Naive thymus-derived CD4-positive, alpha-beta T cell (primary cell): ENCODE measurements at regions of chr14 and their contacts with region 1.

Region 1: GRCh38 chr14:59189786-59190771 is 1.6 kb downstream of the DAAM1 start:
- DNase-seq: peak; percentile 34 to 76 (median 49)
- ATAC-seq: peak; percentile 4
- H3K4me3 ChIP-seq: peak overlapping the region; percentile 93
- H3K4me3 Mint-ChIP-seq: peak overlapping the region; percentile 92 to 100 (median 96)
- H3K27ac ChIP-seq: peak overlapping the region; percentile 91
- H3K27ac Mint-ChIP-seq: peak overlapping the region; percentile 85 to 98 (median 93)
- H3K4me1 ChIP-seq: peaks cover 0 to 10% of the 10 kb centered on the region in 2 donors
- H3K4me1 Mint-ChIP-seq: peaks cover 15 to 30% (median 21%) of the 10 kb centered on the region in 7 donors
- H3K27me3 ChIP-seq: no peaks in the 10 kb centered on the region
- H3K27me3 Mint-ChIP-seq: peaks cover 0 to 22% (median 4%) of the 10 kb centered on the region in 5 donors

Region 2: DNA sequence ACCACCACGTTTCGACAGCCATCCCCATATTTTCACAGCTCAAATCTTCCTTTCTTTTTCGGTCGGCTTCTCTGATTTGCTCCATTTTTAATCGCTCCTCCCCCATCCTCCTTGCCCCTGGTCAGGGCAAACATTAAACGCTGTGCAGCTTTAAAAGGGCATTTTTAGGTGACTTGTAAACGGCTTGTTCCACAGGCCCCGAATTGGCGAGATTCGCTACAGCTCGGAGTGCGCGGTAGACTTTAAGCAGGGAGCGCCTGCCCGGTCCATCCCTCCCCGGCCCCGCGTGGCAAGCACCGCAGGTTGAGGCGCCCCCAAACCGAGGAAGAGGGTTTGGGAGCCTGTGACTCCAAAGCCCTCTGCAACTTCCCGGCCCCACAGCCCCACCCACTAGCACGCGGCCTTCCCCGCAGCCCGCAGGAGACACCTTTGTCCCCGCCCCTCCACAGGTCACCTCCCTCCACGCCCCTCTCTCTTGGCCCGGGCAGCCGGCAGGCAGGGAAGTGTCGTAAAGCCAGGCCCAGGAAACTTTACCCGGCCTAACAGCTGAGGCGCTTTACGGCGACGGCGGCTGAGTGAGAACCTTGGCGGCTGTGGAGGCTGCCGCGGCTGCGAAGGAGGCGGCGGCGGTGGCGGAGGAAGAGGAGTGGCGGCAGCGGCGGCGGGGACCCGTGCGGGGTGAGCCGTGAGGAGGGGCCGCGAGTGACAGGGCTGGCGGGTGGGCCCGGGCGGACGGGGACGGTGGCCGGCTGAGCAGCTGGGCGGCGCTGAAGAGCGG is 1799.9 kb before region 1 on chr14 and contains the start of gene NAA30:
- CTCF ChIA-PET with region 1: no interaction called
- POLR2A ChIA-PET with region 1: no interaction called
- intact Hi-C with region 1: loop called in 1 of 2 experiments (anchors 5 kb)
- DNase-seq: peak; percentile 80 to 97 (median 92)
- ATAC-seq: peak; percentile 98
- H3K4me3 ChIP-seq: peak within 1 kb of the TSS; percentile 68
- H3K4me3 Mint-ChIP-seq: peak within 1 kb of the TSS; percentile 86 to 98 (median 94)
- H3K27ac ChIP-seq: peak within 1 kb of the TSS; percentile 72
- H3K27ac Mint-ChIP-seq: peak within 1 kb of the TSS; percentile 88 to 99 (median 95)
- H3K4me1 ChIP-seq: peaks cover 11 to 13% of the 10 kb centered on the region in 2 donors
- H3K4me1 Mint-ChIP-seq: peaks cover 31 to 58% (median 40%) of the 10 kb centered on the region in 7 donors
- H3K27me3 ChIP-seq: no peaks in the 10 kb centered on the region
- H3K27me3 Mint-ChIP-seq: peaks cover 0 to under 1% (median 0%) of the 10 kb centered on the region in 5 donors
- total RNA-seq, gene NAA30: 14.6 to 19.6 (median 16.2) TPM

Region 3: DNA sequence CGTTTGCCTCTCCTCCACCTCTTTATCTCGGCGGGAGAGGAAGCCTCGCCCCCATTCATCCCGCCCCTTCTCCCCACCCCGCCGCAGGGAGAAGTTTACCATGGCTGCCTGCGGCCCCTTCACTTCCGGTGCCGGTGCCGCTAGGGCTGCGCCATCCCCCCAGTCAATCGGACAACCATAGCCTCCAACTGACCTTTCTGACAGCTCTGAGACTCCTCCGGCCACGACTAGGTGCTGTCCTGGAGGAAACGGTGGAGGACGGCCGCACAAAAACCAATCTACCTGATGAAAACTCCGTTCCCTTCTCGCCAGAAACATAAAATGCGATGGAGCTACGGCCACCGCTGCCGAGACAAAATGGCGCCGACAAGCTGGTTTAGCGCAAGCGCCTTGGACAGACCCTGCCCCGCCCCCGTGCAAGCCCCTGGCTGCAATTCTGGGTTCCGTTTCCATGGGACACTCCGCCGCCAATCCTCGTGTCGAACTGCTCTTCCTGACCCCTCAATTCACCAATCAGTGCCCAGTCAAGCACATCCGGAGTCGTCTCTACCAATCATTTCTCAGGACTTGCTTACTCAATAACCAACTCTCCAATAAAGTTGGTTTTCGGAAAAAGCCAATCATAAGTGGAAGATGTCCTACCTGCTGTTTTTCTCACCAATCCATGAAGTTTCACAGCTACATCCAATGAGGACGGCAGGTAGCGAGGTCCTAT is 892.2 kb before region 1 on chr14:
- CTCF ChIA-PET with region 1: no interaction called
- POLR2A ChIA-PET with region 1: interaction called, 4 read pairs
- intact Hi-C with region 1: loop called (anchors 1 kb)
- DNase-seq: peak; percentile 90 to 100 (median 99)
- ATAC-seq: peak; percentile 91
- H3K4me3 ChIP-seq: peak overlapping the region; percentile 91
- H3K4me3 Mint-ChIP-seq: no peak overlapping the region
- H3K27ac ChIP-seq: peak overlapping the region; percentile 94
- H3K27ac Mint-ChIP-seq: no peak overlapping the region
- H3K4me1 ChIP-seq: peaks cover 17 to 23% of the 10 kb centered on the region in 2 donors
- H3K4me1 Mint-ChIP-seq: peaks cover 36 to 64% (median 55%) of the 10 kb centered on the region in 7 donors
- H3K27me3 ChIP-seq: no peaks in the 10 kb centered on the region
- H3K27me3 Mint-ChIP-seq: no peaks in the 10 kb centered on the region

Region 4: GRCh38 chr14:58533446-58533845 is 656.6 kb before region 1 on chr14:
- CTCF ChIA-PET with region 1: no interaction called
- POLR2A ChIA-PET with region 1: no interaction called
- intact Hi-C with region 1: no loop called
- DNase-seq: no peak
- ATAC-seq: no peak
- H3K4me3 ChIP-seq: no peak overlapping the region
- H3K4me3 Mint-ChIP-seq: no peak overlapping the region
- H3K27ac ChIP-seq: no peak overlapping the region
- H3K27ac Mint-ChIP-seq: peak overlapping the region in 8 of 9 donors; percentile 29 to 80 (median 66)
- H3K4me1 ChIP-seq: no peaks in the 10 kb centered on the region
- H3K4me1 Mint-ChIP-seq: peaks cover under 1 to 34% (median 18%) of the 10 kb centered on the region in 7 donors
- H3K27me3 ChIP-seq: no peaks in the 10 kb centered on the region
- H3K27me3 Mint-ChIP-seq: no peaks in the 10 kb centered on the region

Region 5: GRCh38 chr14:58598028-58598803 is 591.9 kb before region 1 on chr14:
- CTCF ChIA-PET with region 1: no interaction called
- POLR2A ChIA-PET with region 1: no interaction called
- intact Hi-C with region 1: loop called in 1 of 2 experiments (anchors 2 kb)
- DNase-seq: peak in 7 of 9 donors; percentile 54 to 81 (median 74)
- ATAC-seq: peak; percentile 92
- H3K4me3 ChIP-seq: peak overlapping the region; percentile 3
- H3K4me3 Mint-ChIP-seq: peak overlapping the region; percentile 49 to 78 (median 72)
- H3K27ac ChIP-seq: peak overlapping the region; percentile 7
- H3K27ac Mint-ChIP-seq: peak overlapping the region; percentile 42 to 92 (median 72)
- H3K4me1 ChIP-seq: peaks cover 0 to 46% of the 10 kb centered on the region in 2 donors
- H3K4me1 Mint-ChIP-seq: peaks cover 16 to 59% (median 47%) of the 10 kb centered on the region in 7 donors
- H3K27me3 ChIP-seq: no peaks in the 10 kb centered on the region
- H3K27me3 Mint-ChIP-seq: peaks cover 0 to 5% (median 0%) of the 10 kb centered on the region in 5 donors

Region 6: GRCh38 chr14:58872061-58872460 is 318.0 kb before region 1 on chr14:
- CTCF ChIA-PET with region 1: no interaction called
- POLR2A ChIA-PET with region 1: no interaction called
- intact Hi-C with region 1: no loop called
- DNase-seq: no peak
- ATAC-seq: no peak
- H3K4me3 ChIP-seq: no peak overlapping the region
- H3K4me3 Mint-ChIP-seq: no peak overlapping the region
- H3K27ac ChIP-seq: no peak overlapping the region
- H3K27ac Mint-ChIP-seq: no peak overlapping the region
- H3K4me1 ChIP-seq: no peaks in the 10 kb centered on the region
- H3K4me1 Mint-ChIP-seq: no peaks in the 10 kb centered on the region
- H3K27me3 ChIP-seq: no peaks in the 10 kb centered on the region
- H3K27me3 Mint-ChIP-seq: peaks cover 0 to 5% (median 0%) of the 10 kb centered on the region in 5 donors

Region 7: GRCh38 chr14:59228421-59228820 is 38.3 kb after region 1 on chr14:
- CTCF ChIA-PET with region 1: no interaction called
- POLR2A ChIA-PET with region 1: no interaction called
- intact Hi-C with region 1: no loop called
- DNase-seq: no peak
- ATAC-seq: no peak
- H3K4me3 ChIP-seq: no peak overlapping the region
- H3K4me3 Mint-ChIP-seq: no peak overlapping the region
- H3K27ac ChIP-seq: no peak overlapping the region
- H3K27ac Mint-ChIP-seq: peak overlapping the region in 1 of 9 donors; percentile 42
- H3K4me1 ChIP-seq: peaks cover 0 to 9% of the 10 kb centered on the region in 2 donors
- H3K4me1 Mint-ChIP-seq: peaks cover 7 to 38% (median 26%) of the 10 kb centered on the region in 7 donors
- H3K27me3 ChIP-seq: no peaks in the 10 kb centered on the region
- H3K27me3 Mint-ChIP-seq: peaks cover 0 to 2% (median 0%) of the 10 kb centered on the region in 5 donors

Region 8: GRCh38 chr14:59483900-59484638 is 294.0 kb after region 1 on chr14 and contains the starts of genes JKAMP and L3HYPDH:
- CTCF ChIA-PET with region 1: no interaction called
- POLR2A ChIA-PET with region 1: interaction called, 7 read pairs
- intact Hi-C with region 1: loop called (anchors 1 kb)
- DNase-seq: peak; percentile 93 to 98 (median 97)
- ATAC-seq: peak; percentile 97
- H3K4me3 ChIP-seq: peak within 1 kb of the TSS; percentile 81
- H3K4me3 Mint-ChIP-seq: peak within 1 kb of the TSS; percentile 89 to 98 (median 96)
- H3K27ac ChIP-seq: peak within 1 kb of the TSS; percentile 84
- H3K27ac Mint-ChIP-seq: peak within 1 kb of the TSS; percentile 85 to 96 (median 94)
- H3K4me1 ChIP-seq: peaks cover 18 to 20% of the 10 kb centered on the region in 2 donors
- H3K4me1 Mint-ChIP-seq: peaks cover 44 to 82% (median 76%) of the 10 kb centered on the region in 7 donors
- H3K27me3 ChIP-seq: no peaks in the 10 kb centered on the region
- H3K27me3 Mint-ChIP-seq: no peaks in the 10 kb centered on the region
- total RNA-seq, gene JKAMP: 12.2 to 33.7 (median 32.5) TPM
- total RNA-seq, gene L3HYPDH: 18.9 to 55.9 (median 24.2) TPM

Region 9: DNA sequence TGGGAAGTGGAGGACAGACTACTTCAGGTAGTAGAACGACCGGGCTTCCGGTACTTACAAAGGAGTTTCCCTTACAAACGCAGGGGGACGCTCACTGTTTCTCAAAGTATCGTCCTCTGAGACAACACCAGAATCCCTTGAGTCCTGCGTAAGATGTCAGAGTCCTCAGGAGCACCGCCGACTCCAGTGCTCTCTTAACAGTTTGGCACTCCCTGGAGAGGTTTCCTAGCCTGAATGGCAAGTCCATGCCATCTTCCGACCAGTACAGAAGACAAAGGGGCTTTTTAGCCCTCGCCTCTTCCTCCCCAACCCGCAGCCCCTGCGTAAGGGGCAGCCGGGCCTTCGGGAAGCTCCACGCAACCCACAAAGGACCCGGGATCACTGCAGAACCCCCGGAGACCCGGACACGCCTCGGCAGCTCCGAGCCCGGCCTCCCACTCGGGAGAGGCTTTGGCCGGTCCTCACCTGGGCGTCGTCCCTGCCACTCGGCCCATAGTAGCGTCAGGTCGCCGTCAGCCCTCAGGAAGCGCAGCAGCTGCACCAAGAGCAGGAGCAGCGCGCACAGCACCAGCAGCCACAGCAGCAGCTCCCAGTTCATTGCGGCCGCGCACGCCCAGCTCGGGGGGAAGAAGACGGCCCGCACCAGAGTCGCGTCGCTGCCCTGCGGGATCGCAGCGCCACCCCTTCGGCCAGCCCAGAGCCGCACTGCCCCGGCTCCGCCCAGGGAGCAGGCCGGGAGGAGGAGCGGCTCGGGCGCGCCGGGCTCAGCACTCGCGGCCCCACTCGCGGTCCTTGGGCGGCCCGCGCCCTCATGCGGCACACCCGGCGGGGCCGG is 974.9 kb after region 1 on chr14 and contains the start of gene DHRS7:
- CTCF ChIA-PET with region 1: no interaction called
- POLR2A ChIA-PET with region 1: interaction called, 3 read pairs
- intact Hi-C with region 1: loop called in 1 of 2 experiments (anchors 5 kb)
- DNase-seq: peak; percentile 47 to 75 (median 60)
- ATAC-seq: peak; percentile 85
- H3K4me3 ChIP-seq: peak within 1 kb of the TSS; percentile 85
- H3K4me3 Mint-ChIP-seq: peak within 1 kb of the TSS; percentile 86 to 99 (median 95)
- H3K27ac ChIP-seq: peak within 1 kb of the TSS; percentile 90
- H3K27ac Mint-ChIP-seq: peak within 1 kb of the TSS; percentile 91 to 99 (median 97)
- H3K4me1 ChIP-seq: peaks cover 20 to 27% of the 10 kb centered on the region in 2 donors
- H3K4me1 Mint-ChIP-seq: peaks cover 22 to 53% (median 42%) of the 10 kb centered on the region in 7 donors
- H3K27me3 ChIP-seq: no peaks in the 10 kb centered on the region
- H3K27me3 Mint-ChIP-seq: no peaks in the 10 kb centered on the region
- total RNA-seq, gene DHRS7: 29.9 to 50.9 (median 38.0) TPM

Region 10: DNA sequence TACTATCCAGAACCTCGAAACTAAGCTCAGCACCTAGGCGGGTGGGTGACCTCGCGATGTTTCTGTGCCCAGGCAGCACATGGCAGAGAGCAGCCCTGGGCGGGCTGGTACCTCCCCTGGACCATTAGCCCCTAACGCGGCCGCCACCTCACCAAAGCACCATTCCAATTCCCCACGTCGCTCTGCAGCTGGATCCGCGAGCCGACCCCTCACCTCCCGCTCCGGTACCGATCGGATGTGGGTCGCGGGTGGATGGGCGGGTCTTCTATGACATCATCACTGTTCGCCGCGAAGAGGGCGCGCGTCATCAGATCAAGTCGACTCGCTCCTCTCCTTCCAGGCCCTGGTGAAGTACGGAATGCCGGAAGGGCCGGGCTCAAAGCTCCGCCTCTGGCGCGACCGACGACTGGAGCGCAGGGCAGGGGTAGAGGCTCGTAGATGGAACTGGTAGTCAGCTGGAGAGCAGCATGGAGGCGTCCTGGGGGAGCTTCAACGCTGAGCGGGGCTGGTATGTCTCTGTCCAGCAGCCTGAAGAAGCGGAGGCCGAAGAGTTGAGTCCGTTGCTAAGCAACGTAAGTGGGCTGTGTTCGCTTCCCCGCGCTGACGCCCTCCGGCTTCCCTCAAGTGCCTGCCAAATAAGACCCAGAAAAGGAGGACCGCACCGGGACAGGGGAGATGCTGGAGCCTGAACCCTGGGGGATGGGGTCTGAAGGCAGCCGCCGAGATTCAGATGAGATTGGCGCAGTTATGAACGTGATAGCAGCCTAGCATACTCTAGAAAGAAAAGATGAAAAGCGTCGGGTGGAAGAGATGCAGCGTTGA is 1790.9 kb after region 1 on chr14 and contains the starts of genes SLC38A6 and TRMT5:
- CTCF ChIA-PET with region 1: no interaction called
- POLR2A ChIA-PET with region 1: no interaction called
- intact Hi-C with region 1: loop called (anchors 1 to 2 kb)
- DNase-seq: peak; percentile 84 to 95 (median 93)
- ATAC-seq: peak; percentile 91
- H3K4me3 ChIP-seq: peak within 1 kb of the TSS; percentile 94
- H3K4me3 Mint-ChIP-seq: no peak within 1 kb of the TSS
- H3K27ac ChIP-seq: peak within 1 kb of the TSS; percentile 88
- H3K27ac Mint-ChIP-seq: no peak within 1 kb of the TSS
- H3K4me1 ChIP-seq: peaks cover 11 to 14% of the 10 kb centered on the region in 2 donors
- H3K4me1 Mint-ChIP-seq: peaks cover 12 to 39% (median 26%) of the 10 kb centered on the region in 7 donors
- H3K27me3 ChIP-seq: no peaks in the 10 kb centered on the region
- H3K27me3 Mint-ChIP-seq: no peaks in the 10 kb centered on the region
- total RNA-seq, gene SLC38A6: 8.9 to 21.9 (median 15.8) TPM
- total RNA-seq, gene TRMT5: 1.9 to 10.6 (median 6.5) TPM